ENCODE measurements at regions of chr2 and their contacts with region 1.

Region 1: GRCh38 chr2:202454536-202454935 is 78.4 kb downstream of the BMPR2 start:
- DNase-seq: no peak
- ATAC-seq: no peak
- H3K4me3 ChIP-seq: no peak overlapping the region
- H3K27ac ChIP-seq: no peak overlapping the region
- H3K4me1 ChIP-seq: no peaks in the 10 kb centered on the region
- H3K27me3 ChIP-seq: no peaks in the 10 kb centered on the region
- CTCF ChIP-seq: no peak

Region 2: DNA sequence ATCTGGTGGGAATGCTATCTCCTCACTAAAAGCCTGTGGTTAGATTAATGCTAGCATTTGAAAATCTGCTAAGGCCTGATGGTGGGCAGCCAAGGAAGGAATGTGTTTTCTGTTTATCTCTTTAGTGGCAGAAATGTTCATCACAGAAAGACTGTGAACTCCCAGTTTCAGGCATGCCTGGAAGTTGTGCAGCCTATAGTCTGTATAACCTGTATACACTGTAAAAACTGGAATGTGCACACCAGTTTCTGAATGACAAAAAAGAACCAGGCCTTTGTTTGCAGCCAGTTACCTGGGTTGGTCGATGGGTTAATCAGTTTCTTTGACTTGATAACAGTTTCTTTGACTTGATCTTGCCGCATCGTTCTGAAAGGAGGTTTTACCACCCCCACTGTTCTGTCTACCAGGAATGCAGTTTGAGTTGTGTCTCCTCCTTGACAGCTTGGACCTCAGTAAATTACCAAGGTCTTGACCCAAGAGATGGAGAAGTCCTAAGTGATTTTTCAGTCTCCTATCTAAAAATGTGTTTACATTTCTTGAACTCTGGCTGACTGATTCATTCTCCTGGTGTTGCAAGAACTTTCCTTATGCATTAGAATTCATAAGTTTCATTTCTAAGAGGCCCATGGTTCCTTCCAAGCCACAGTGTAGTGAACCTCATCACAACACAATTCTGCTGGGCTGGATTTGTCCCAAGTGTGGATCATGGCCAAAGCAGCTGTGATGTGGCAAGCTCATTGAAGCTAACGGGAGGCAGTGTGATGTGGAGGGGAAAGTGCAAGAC is 319.3 kb before region 1 on chr2:
- CTCF ChIA-PET with region 1: no interaction called
- POLR2A ChIA-PET with region 1: no interaction called
- in situ Hi-C with region 1: no loop called
- intact Hi-C with region 1: no loop called
- DNase-seq: no peak
- ATAC-seq: peak; percentile 58
- H3K4me3 ChIP-seq: no peak overlapping the region
- H3K27ac ChIP-seq: no peak overlapping the region
- H3K4me1 ChIP-seq: peaks cover 4% of the 10 kb centered on the region; the same call in 1 of the 2 replicates
- H3K27me3 ChIP-seq: no peaks in the 10 kb centered on the region
- CTCF ChIP-seq: no peak

Region 3: GRCh38 chr2:202278944-202279343 is 175.6 kb before region 1 on chr2:
- CTCF ChIA-PET with region 1: no interaction called
- POLR2A ChIA-PET with region 1: interaction called, 10 read pairs
- in situ Hi-C with region 1: no loop called
- intact Hi-C with region 1: no loop called
- DNase-seq: no peak
- ATAC-seq: peak; percentile 59; the same call in 1 of the 2 replicates
- H3K4me3 ChIP-seq: no peak overlapping the region
- H3K27ac ChIP-seq: no peak overlapping the region
- H3K4me1 ChIP-seq: peaks cover 15% of the 10 kb centered on the region
- H3K27me3 ChIP-seq: no peaks in the 10 kb centered on the region
- CTCF ChIP-seq: no peak

Region 4: DNA sequence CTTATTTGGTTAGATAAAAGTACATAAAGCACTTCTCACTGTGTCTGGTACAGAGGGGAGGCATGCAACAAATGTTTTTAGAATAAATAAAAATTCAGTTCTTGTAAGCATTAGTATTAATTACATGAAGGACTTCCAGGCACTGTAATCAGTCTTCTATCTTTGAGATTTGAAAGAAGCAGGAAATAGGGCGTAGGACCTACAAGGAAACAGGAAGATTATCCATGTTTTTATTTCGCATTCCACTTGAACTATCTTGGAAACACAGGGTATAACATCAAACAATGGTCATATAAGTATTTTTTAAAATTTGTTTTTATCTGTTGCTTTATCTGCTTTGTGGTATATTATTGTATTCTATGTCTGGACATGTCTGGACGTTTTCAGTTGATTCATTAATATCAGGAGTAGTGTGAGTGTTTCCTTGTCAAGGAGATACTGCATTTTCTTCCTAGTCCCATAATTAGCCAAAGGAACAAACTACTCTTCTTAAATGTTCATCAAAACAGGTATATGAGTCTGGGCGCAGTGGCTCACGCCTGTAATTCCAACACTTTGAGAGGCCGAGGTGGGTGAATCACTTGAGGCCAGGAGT is 45.9 kb before region 1 on chr2:
- CTCF ChIA-PET with region 1: no interaction called
- POLR2A ChIA-PET with region 1: no interaction called
- in situ Hi-C with region 1: no loop called
- intact Hi-C with region 1: no loop called
- DNase-seq: no peak
- ATAC-seq: no peak
- H3K4me3 ChIP-seq: no peak overlapping the region
- H3K27ac ChIP-seq: no peak overlapping the region
- H3K4me1 ChIP-seq: peaks cover 2% of the 10 kb centered on the region; the same call in 1 of the 2 replicates
- H3K27me3 ChIP-seq: no peaks in the 10 kb centered on the region
- CTCF ChIP-seq: no peak

Measured in Panc1 (cell line).